Activated CD4-positive, alpha-beta T cell treated with anti-CD3 and anti-CD28 coated beads for 36 hours (primary cell): ENCODE measurements at regions of chr4 and their contacts with region 1.

Region 1: GRCh38 chr4:128060699-128061565 is at the start of gene LARP1B:
- DNase-seq: peak; percentile 96
- ATAC-seq: peak; percentile 92
- H3K4me3 Mint-ChIP-seq: peak within 1 kb of the TSS; percentile 81
- H3K27ac Mint-ChIP-seq: peak within 1 kb of the TSS; percentile 93
- H3K4me1 Mint-ChIP-seq: peaks cover 14% of the 10 kb centered on the region
- H3K27me3 Mint-ChIP-seq: no peaks in the 10 kb centered on the region
- total RNA-seq, gene LARP1B: 22.1 to 26.0 TPM

Region 2: GRCh38 chr4:127782274-127783025 is 278.5 kb before region 1 on chr4 and contains the start of gene HSPA4L:
- CTCF ChIA-PET with region 1: no interaction called
- POLR2A ChIA-PET with region 1: no interaction called
- intact Hi-C with region 1: loop called in 1 of 2 experiments (anchors 2 kb)
- DNase-seq: peak; percentile 65
- ATAC-seq: peak; percentile 59
- H3K4me3 Mint-ChIP-seq: peak within 1 kb of the TSS; percentile 74
- H3K27ac Mint-ChIP-seq: peak within 1 kb of the TSS; percentile 86
- H3K4me1 Mint-ChIP-seq: peaks cover 14% of the 10 kb centered on the region
- H3K27me3 Mint-ChIP-seq: peaks cover 56% of the 10 kb centered on the region
- total RNA-seq, gene HSPA4L: 2.7 to 3.0 TPM

Region 3: GRCh38 chr4:127965062-127965802 is 95.7 kb before region 1 on chr4 and contains the starts of genes ABHD18 and MFSD8:
- CTCF ChIA-PET with region 1: interaction called, 8 read pairs
- POLR2A ChIA-PET with region 1: interaction called, 41 read pairs
- intact Hi-C with region 1: loop called (anchors 1 kb)
- DNase-seq: peak; percentile 100
- ATAC-seq: peak; percentile 97
- H3K4me3 Mint-ChIP-seq: peak within 1 kb of the TSS; percentile 90
- H3K27ac Mint-ChIP-seq: peak within 1 kb of the TSS; percentile 97
- H3K4me1 Mint-ChIP-seq: peaks cover 32% of the 10 kb centered on the region
- H3K27me3 Mint-ChIP-seq: no peaks in the 10 kb centered on the region
- total RNA-seq, gene ABHD18: 23.5 to 24.2 TPM
- total RNA-seq, gene MFSD8: 10.2 to 13.8 TPM

Region 4: GRCh38 chr4:128287871-128288688 is 227.1 kb after region 1 on chr4:
- CTCF ChIA-PET with region 1: no interaction called
- POLR2A ChIA-PET with region 1: interaction called, 11 read pairs
- intact Hi-C with region 1: loop called (anchors 1 kb)
- DNase-seq: peak; percentile 100
- ATAC-seq: peak; percentile 85
- H3K4me3 Mint-ChIP-seq: peak overlapping the region; percentile 79
- H3K27ac Mint-ChIP-seq: peak overlapping the region; percentile 93
- H3K4me1 Mint-ChIP-seq: peaks cover 27% of the 10 kb centered on the region
- H3K27me3 Mint-ChIP-seq: no peaks in the 10 kb centered on the region